Naive thymus-derived CD8-positive, alpha-beta T cell (primary cell): ENCODE measurements at regions of chr4 and their contacts with region 1.

Region 1: GRCh38 chr4:74444891-74445642 is at the start of gene AREG:
- DNase-seq: peak; percentile 84 to 96 (median 94)
- ATAC-seq: peak; percentile 93 to 95
- H3K4me3 Mint-ChIP-seq: peak within 1 kb of the TSS; percentile 88 to 98 (median 93)
- H3K27ac Mint-ChIP-seq: peak within 1 kb of the TSS; percentile 86 to 99 (median 96)
- H3K4me1 Mint-ChIP-seq: peaks cover 4 to 15% (median 10%) of the 10 kb centered on the region in 4 donors
- H3K27me3 Mint-ChIP-seq: peaks cover 0 to 4% (median 2%) of the 10 kb centered on the region in 5 donors
- polyA plus RNA-seq, gene AREG: 0.98 to 9.0 (median 2.2) TPM

Region 2: GRCh38 chr4:74397748-74398426 is 47.2 kb before region 1 on chr4:
- POLR2A ChIA-PET with region 1: interaction called, 11 read pairs
- DNase-seq: peak in 1 of 10 donors; percentile 44
- ATAC-seq: peak; percentile 82 to 87
- H3K4me3 Mint-ChIP-seq: peak overlapping the region; percentile 93 to 99 (median 98)
- H3K27ac Mint-ChIP-seq: peak overlapping the region; percentile 96 to 100 (median 99)
- H3K4me1 Mint-ChIP-seq: peaks cover 0 to 13% (median 4%) of the 10 kb centered on the region in 4 donors
- H3K27me3 Mint-ChIP-seq: no peaks in the 10 kb centered on the region